ENCODE measurements at regions of chr1 and their contacts with region 1.

Region 1: DNA sequence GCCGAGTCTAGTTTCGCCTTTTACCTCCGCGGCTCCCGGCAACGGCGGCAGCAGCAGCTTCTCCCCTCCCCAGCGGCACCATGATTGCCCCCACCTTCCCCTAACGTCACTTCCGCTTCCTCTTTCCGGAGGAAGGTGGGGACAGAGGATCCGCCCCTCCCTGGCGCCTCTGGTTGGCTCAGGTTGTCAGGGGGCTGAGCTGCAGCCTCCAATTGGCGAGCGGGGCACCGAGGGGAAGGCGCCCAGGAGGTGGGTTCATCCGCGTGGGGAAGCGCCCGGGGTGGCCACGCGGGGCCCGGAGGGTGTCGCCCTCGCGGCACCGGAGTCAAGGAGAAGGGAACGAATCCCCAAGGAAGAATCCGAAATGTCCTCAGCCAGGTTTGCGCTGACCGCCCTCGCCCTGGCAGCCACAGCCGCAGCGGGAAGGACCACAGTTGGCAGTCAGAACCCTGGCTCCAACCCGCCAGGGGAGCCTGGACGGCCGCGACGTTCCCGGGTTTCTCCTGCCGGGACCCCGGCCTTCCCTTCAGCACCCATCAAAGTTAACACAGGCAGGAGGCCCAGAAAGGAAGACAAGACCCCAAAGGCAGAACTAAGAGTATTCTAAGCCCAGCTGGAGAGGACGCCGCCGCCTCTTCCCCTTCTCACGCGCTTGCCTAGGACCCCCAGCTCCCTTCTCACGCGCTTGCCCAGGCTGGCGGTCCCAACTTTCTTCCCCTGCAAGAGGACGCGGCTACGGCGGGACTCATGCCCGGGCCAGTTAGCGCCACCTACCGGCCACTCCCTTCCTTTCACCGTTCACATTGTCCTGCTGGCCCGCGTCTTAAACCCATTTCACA is at the start of gene MTF1:
- DNase-seq: peak; percentile 98
- H3K4me3 ChIP-seq: peak within 1 kb of the TSS; percentile 84
- H3K27ac ChIP-seq: peak within 1 kb of the TSS; percentile 71
- H3K4me1 ChIP-seq: peaks cover 25% of the 10 kb centered on the region
- CTCF ChIP-seq: peak; percentile 90
- total RNA-seq, gene MTF1: 1.6 and 1.8 TPM in 2 replicates

Region 2: DNA sequence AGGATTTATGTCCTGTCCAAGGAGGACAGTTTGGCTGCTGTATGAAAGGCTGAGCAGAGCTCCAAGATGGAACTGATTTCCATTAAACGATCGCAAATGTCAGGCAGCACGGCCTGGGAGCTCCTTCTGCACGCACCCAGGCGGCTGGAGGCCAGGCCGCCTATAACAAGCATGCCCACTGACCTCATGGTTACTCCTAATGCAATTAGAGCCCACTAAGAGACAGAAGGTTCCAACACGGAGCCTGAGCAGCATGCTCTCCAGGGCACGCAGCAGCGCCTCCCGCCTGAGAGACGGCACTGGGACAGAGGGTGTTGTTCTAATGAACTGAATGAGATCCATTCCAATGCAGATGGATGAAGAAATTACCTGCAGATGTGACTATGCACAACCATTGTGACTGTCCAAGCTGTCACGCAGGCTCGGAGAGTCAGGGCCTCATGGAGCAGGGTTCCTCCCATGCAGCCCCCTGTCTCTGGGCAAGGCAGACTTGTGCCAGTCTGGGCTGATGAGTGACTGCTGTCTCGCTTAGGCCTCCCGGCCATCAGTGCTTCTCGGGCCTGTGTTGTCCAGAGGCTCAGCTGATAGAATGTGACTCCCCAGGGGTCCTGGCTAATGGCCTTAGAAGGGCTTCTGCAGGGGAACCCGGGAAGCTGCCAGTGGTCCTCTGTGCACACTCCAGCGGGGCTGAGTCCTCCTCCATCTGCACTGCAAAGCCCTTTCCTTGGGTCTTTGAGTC is 192.5 kb before region 1 on chr1:
- CTCF ChIA-PET with region 1: no interaction called
- POLR2A ChIA-PET with region 1: no interaction called
- intact Hi-C with region 1: no loop called
- DNase-seq: no peak
- H3K4me3 ChIP-seq: no peak overlapping the region
- H3K27ac ChIP-seq: no peak overlapping the region
- H3K4me1 ChIP-seq: peaks cover 10% of the 10 kb centered on the region
- CTCF ChIP-seq: no peak

Region 3: DNA sequence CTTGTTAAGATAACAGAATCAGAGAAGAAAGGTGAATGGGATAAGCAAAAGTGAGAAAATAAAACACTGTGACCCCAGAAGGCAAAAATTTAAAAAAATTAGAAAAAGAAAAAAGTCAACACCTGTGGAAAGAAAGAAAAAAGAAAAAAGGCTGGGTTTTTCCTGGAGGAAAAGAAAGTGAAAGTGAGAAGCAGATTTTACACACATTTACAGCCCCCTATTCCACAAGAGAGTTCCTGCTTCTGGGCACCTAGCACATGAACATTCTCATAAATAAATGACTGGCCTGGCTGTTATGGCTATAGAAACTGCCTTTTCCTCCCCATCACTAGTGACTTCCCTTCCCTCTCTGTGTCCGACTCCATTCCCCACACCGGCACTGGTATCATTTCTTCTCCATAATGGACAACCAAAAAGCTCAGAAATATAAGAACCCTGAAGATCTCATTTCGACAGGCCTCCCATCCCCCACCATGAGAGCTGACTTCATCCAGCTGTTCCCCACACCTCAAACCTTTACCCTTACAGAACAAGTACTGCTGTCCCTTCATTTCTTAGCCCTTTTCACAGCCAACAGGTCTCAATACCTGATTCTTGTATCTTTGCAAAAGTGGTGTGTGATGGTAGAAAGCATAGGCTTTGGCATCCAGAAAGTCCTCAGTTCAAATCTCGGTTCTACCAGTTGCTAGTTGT is 12.9 kb before region 1 on chr1:
- CTCF ChIA-PET with region 1: interaction called, 4 read pairs
- POLR2A ChIA-PET with region 1: interaction called, 11 read pairs
- intact Hi-C with region 1: no loop called
- DNase-seq: no peak
- H3K4me3 ChIP-seq: no peak overlapping the region
- H3K27ac ChIP-seq: no peak overlapping the region
- H3K4me1 ChIP-seq: peaks cover 16% of the 10 kb centered on the region
- CTCF ChIP-seq: no peak

Measured in OCI-LY7 (cell line).